Activated naive CD4-positive, alpha-beta T cell treated with anti-CD3 and anti-CD28 coated beads for 36 hours (primary cell): ENCODE measurements at regions of chr1 and their contacts with region 1.

Region 1: DNA sequence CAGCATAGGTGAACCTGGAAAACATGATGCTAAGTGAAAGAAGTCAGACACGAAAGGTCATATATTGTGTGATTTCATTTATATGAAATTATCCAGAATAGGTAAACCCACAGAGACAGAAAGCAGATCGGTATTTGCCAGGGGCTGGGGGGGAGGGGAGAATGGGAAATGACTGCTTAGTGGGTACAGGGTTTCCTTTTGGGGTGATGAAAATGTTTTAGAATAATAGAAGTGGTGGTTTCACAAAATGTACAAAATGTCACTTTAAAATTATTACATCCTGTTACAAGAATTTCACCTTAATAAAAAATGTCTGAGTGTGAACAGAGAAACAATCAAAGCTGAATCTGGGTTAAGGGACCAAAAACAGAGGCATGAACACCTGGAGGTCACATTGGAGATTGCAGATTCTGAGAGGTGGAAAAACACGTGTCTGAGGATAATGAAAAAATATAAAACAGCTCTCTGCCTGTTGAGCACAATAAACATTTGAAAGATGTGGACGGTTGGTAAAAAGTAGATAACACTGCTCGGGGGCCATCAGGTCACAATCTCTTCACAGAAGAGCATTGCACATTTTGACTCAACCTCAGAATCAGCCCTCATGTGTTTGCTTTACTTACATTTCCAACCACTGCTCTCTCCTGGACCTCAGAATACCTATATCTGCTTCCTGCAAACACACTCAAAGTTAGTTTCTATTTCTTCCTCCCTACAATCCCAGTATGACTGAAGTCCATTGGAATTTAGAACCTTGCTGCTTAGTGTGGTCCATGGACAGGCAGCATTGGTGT is 3.2 kb downstream of the SLAMF6 start:
- DNase-seq: peak; percentile 60
- H3K4me3 Mint-ChIP-seq: peak overlapping the region; percentile 85
- H3K27ac Mint-ChIP-seq: peak overlapping the region; percentile 97
- H3K4me1 Mint-ChIP-seq: peaks cover 71% of the 10 kb centered on the region
- H3K27me3 Mint-ChIP-seq: no peaks in the 10 kb centered on the region

Region 2: GRCh38 chr1:159009704-159010361 is 1510.0 kb before region 1 on chr1 and contains the start of gene IFI16:
- CTCF ChIA-PET with region 1: no interaction called
- intact Hi-C with region 1: loop called (anchors 10 kb)
- DNase-seq: peak; percentile 82
- H3K4me3 Mint-ChIP-seq: peak within 1 kb of the TSS; percentile 91
- H3K27ac Mint-ChIP-seq: peak within 1 kb of the TSS; percentile 99
- H3K4me1 Mint-ChIP-seq: peaks cover 39% of the 10 kb centered on the region
- H3K27me3 Mint-ChIP-seq: no peaks in the 10 kb centered on the region
- total RNA-seq, gene IFI16: 287 to 288 TPM

Region 3: DNA sequence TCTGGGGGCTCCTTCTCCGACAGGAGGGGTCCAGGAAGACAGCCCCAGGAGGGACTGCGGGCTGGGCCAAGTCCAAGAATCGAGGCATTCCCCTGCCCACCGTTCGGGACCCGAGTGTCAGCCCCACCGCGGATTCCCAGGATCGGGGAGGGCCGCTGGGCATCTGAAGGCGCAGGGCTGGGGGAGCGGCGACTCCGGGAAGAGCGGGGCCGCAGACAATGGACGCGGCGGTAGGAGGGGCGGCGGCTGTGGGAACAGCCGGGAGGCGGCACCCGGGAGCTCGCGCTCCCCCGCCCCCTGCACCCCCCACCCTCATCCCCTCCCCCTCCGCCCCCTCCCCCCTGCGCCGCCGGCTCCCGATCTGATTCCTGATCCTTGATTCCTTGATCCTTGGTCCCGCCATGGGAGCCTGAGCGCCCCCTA is 119.6 kb before region 1 on chr1 and contains the start of gene VANGL2:
- CTCF ChIA-PET with region 1: no interaction called
- intact Hi-C with region 1: no loop called
- DNase-seq: peak; percentile 31
- H3K4me3 Mint-ChIP-seq: peak within 1 kb of the TSS; percentile 44
- H3K27ac Mint-ChIP-seq: no peak within 1 kb of the TSS
- H3K4me1 Mint-ChIP-seq: peaks cover 3% of the 10 kb centered on the region
- H3K27me3 Mint-ChIP-seq: peaks cover 13% of the 10 kb centered on the region
- total RNA-seq, gene VANGL2: 0.27 TPM in 1 of 2 experiments, not detected in the other

Region 4: GRCh38 chr1:160474392-160475242 is 45.2 kb before region 1 on chr1:
- CTCF ChIA-PET with region 1: interaction called, 4 read pairs
- intact Hi-C with region 1: loop called (anchors 1 kb)
- DNase-seq: peak; percentile 49
- H3K4me3 Mint-ChIP-seq: no peak overlapping the region
- H3K27ac Mint-ChIP-seq: no peak overlapping the region
- H3K4me1 Mint-ChIP-seq: no peaks in the 10 kb centered on the region
- H3K27me3 Mint-ChIP-seq: no peaks in the 10 kb centered on the region

Region 5: GRCh38 chr1:160539990-160540858 is 20.4 kb after region 1 on chr1:
- CTCF ChIA-PET with region 1: interaction called, 12 read pairs
- intact Hi-C with region 1: loop called (anchors 1 kb)
- DNase-seq: peak; percentile 73
- H3K4me3 Mint-ChIP-seq: peak overlapping the region; percentile 52
- H3K27ac Mint-ChIP-seq: peak overlapping the region; percentile 96
- H3K4me1 Mint-ChIP-seq: peaks cover 55% of the 10 kb centered on the region
- H3K27me3 Mint-ChIP-seq: no peaks in the 10 kb centered on the region

Region 6: GRCh38 chr1:160607011-160607671 is 87.3 kb after region 1 on chr1:
- CTCF ChIA-PET with region 1: interaction called, 14 read pairs
- intact Hi-C with region 1: loop called (anchors 1 kb)
- DNase-seq: peak; percentile 81
- H3K4me3 Mint-ChIP-seq: no peak overlapping the region
- H3K27ac Mint-ChIP-seq: peak overlapping the region; percentile 82
- H3K4me1 Mint-ChIP-seq: peaks cover 48% of the 10 kb centered on the region
- H3K27me3 Mint-ChIP-seq: no peaks in the 10 kb centered on the region

Region 7: GRCh38 chr1:160629286-160630210 is 109.7 kb after region 1 on chr1:
- CTCF ChIA-PET with region 1: no interaction called
- intact Hi-C with region 1: loop called (anchors 1 kb)
- DNase-seq: peak; percentile 91
- H3K4me3 Mint-ChIP-seq: peak overlapping the region; percentile 66
- H3K27ac Mint-ChIP-seq: peak overlapping the region; percentile 96
- H3K4me1 Mint-ChIP-seq: peaks cover 95% of the 10 kb centered on the region
- H3K27me3 Mint-ChIP-seq: no peaks in the 10 kb centered on the region

Region 8: GRCh38 chr1:161389691-161390558 is 870.1 kb after region 1 on chr1:
- CTCF ChIA-PET with region 1: no interaction called
- intact Hi-C with region 1: no loop called
- DNase-seq: peak; percentile 97
- H3K4me3 Mint-ChIP-seq: peak overlapping the region; percentile 96
- H3K27ac Mint-ChIP-seq: peak overlapping the region; percentile 95
- H3K4me1 Mint-ChIP-seq: peaks cover 50% of the 10 kb centered on the region
- H3K27me3 Mint-ChIP-seq: no peaks in the 10 kb centered on the region